ENCODE measurements at regions of chr9 and their contacts with region 1.

Region 1: DNA sequence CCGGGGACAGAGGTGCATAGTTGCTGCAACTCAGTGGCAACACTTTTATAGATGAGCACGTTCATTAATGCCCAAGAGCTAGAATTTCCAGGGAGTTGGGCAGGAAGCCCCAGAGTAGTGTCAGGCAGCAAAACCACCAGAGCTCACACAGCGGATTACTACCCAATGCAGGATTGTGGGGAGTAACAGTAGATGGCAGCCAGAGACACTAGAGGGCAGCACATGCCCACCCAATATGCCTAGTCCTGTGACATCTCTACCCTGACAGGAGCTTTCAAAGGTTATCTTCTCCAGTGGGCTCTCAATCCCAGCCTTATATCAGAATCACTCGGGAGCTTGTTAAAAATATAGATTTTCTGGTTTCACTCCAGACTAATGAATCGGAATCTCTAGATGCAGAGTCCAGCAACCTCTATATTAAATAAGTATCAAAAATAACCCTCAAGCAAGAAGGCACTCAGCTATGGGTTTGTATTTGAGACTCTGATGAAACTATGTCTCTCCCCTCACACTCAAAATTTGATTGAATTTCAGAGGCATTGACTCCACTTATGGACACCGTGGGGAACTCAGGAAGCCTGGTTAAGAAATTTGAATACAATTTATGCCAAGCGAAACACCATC is 58.4 kb upstream of the PHF24 start:
- DNase-seq: peak; percentile 83
- ATAC-seq: peak; percentile 100

Region 2: GRCh38 chr9:34646211-34647083 is 253.2 kb before region 1 on chr9 and contains the start of gene GALT:
- intact Hi-C with region 1: no loop called
- DNase-seq: peak; percentile 98
- ATAC-seq: peak; percentile 87
- total RNA-seq, gene GALT: 53.8 TPM

Region 3: DNA sequence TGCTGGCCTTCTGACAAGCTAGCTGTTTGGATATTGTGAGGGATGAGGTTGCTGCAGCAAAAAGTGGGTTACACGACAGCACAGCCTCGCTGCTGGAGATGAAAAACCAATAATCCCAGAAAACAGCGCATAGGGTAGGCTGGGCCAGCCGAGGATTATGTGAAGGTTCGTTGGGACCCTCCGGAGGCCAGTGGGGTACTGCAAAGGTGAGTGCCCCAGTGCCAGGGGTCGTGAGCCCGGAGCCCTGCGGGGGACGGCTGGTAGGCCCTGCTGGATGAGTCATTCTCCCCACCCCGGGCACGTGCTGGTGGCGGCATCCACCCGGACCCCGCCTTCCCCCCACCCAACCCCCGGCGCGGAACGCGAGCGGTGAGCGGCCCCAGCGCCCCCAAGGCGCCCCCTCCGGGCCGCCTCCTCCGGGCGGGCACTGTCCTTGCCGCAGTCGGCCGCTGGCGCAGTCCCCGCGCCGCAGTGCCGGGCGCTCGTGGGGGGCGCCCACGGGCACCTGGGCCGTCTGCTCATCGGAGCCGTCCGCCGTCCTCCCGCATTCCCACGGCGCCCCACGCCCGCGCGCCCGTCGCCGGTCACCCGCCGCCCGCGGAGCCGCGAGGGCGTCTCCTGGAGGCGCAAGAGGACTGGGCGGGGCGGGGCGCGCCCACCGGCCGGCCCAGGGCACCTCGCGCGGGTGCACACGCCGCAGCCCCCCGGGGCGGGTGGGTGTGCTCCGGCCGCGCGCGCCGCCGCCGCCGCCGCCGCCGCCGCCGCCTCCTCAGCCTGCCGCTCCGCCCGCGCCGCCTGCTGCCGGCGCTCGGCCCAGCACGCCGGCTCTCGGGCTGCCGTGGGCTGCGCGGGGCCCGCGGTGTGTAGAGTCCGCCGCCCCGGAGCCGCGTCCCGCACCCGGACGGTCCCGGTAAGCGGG is 58.1 kb after region 1 on chr9 and contains the start of gene PHF24:
- intact Hi-C with region 1: no loop called
- DNase-seq: peak; percentile 39
- ATAC-seq: peak; percentile 75
- total RNA-seq, gene PHF24: 0.19 TPM

Region 4: GRCh38 chr9:34976441-34976840 is 76.8 kb after region 1 on chr9:
- intact Hi-C with region 1: no loop called
- DNase-seq: no peak
- ATAC-seq: no peak

Region 5: DNA sequence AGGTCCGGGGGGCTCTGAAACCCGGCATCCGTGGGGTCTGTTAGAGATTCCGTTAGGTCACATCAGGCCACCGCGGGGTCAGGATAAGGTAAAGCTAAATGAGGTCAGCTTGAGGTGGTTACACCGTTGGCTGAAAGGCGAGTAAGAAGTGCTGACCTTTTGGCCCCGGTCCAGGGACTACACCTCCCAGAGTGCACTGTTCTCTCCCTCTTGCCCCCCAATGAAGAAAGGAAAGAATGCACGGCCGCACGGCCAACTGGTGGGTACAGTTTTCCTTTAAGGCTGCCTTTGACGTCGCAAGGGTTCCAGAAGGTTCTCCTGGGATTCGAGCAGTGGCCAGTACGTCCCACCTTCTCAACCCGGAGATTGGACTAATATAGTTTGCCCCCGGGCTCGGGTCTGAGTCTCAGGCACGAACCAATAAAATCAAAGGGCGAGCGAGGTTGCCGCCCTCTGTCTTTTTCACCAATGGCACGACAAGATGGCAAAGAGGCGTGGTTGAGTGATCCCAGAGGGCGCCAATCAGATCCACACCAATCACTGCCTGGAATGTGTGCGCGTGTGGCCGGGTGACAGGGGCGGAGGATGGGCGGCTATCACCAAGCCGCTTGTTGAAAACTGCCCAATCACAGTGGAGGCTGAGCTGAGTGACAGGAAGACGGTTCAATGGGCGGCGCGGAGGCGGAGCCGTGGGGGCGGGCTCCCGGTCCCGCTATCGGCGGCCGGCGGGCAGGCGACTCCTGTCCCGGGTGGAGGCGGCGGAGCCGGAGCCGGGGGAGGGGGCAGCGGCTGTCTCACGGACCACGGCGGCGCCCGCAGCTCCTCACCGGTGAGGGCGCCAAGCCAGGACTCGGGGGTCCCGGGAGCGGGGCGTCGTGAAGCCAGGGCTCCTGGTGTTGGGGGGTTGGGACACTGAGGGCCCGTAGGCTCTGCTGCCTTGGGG is 89.6 kb after region 1 on chr9 and contains the start of gene DNAJB5:
- intact Hi-C with region 1: loop called (anchors 5 kb)
- DNase-seq: peak; percentile 99
- ATAC-seq: peak; percentile 85
- total RNA-seq, gene DNAJB5: 48.7 TPM

Region 6: GRCh38 chr9:35056571-35057270 is 157.1 kb after region 1 on chr9:
- intact Hi-C with region 1: loop called (anchors 5 kb)
- DNase-seq: no peak
- ATAC-seq: no peak

Region 7: GRCh38 chr9:35096035-35096849 is 196.6 kb after region 1 on chr9 and contains the start of gene PIGO:
- intact Hi-C with region 1: loop called (anchors 5 kb)
- DNase-seq: peak; percentile 95
- ATAC-seq: peak; percentile 97
- total RNA-seq, gene PIGO: 8.2 TPM

Region 8: DNA sequence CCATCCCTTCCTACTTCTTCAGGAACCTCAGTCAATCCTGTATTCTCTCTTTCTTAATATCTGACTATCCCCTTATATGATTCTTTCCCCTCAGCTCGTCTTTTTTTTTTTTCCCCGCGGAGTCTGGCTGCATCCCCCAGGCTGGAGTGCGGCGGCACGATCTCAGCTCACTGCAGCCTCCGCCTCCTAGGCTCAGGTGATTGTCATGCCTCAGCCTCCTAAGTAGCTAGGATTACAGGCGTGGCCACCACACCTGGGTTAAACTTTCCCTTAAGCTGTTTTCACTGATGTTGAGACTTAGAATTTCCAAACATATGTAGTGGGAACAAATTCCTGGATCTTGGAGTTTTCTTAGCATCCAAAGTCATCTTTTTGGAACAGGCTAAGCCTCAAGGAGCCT is 576.9 kb after region 1 on chr9:
- intact Hi-C with region 1: loop called (anchors 5 kb)
- DNase-seq: no peak
- ATAC-seq: no peak

Region 9: GRCh38 chr9:35829084-35829763 is 929.6 kb after region 1 on chr9 and contains the start of gene TMEM8B:
- intact Hi-C with region 1: no loop called
- DNase-seq: peak; percentile 99
- ATAC-seq: peak; percentile 93
- total RNA-seq, gene TMEM8B: 13.3 TPM

Measured in Right ventricle myocardium superior (tissue), 1 donor.